ENCODE measurements at regions of chr17 and their contacts with region 1.

Region 1: DNA sequence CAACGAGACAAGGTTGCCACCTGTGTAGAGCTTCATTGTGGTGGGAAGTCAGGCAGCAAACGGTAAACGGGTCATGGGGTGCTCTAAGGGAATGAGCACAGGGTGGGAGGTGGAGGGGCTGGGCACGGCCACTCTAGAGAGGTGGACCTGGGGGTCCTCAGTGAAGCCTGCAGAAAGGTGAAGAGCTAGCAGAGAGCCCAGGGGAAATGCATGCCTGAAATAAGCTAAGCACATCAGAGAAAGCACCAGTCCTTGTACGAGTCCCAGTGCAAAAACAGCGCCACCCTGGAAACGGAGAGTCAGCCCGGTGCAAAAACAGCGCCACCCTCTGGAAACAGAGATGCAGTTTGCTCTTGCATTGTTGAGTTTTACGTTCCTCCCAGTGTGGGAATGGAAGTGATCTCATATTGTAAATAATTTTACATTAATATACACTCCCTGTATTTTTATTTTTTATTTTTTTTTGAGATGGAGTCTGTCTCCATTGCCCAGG is 65.0 kb downstream of the TBC1D16 start:
- DNase-seq: peak; percentile 66
- ATAC-seq: peak; percentile 58
- H3K4me3 Mint-ChIP-seq: no peak overlapping the region
- H3K27ac Mint-ChIP-seq: no peak overlapping the region
- H3K4me1 Mint-ChIP-seq: peaks cover 27% of the 10 kb centered on the region
- H3K27me3 Mint-ChIP-seq: no peaks in the 10 kb centered on the region
- CTCF ChIP-seq: peak; percentile 75

Region 2: GRCh38 chr17:79789534-79790353 is 180.9 kb before region 1 on chr17:
- CTCF ChIA-PET with region 1: interaction called, 10 read pairs
- POLR2A ChIA-PET with region 1: no interaction called
- DNase-seq: peak; percentile 82
- ATAC-seq: peak; percentile 50
- H3K4me3 Mint-ChIP-seq: peak overlapping the region; percentile 65
- H3K27ac Mint-ChIP-seq: no peak overlapping the region
- H3K4me1 Mint-ChIP-seq: peaks cover 48% of the 10 kb centered on the region
- H3K27me3 Mint-ChIP-seq: peaks cover 83% of the 10 kb centered on the region
- CTCF ChIP-seq: peak; percentile 65

Region 3: DNA sequence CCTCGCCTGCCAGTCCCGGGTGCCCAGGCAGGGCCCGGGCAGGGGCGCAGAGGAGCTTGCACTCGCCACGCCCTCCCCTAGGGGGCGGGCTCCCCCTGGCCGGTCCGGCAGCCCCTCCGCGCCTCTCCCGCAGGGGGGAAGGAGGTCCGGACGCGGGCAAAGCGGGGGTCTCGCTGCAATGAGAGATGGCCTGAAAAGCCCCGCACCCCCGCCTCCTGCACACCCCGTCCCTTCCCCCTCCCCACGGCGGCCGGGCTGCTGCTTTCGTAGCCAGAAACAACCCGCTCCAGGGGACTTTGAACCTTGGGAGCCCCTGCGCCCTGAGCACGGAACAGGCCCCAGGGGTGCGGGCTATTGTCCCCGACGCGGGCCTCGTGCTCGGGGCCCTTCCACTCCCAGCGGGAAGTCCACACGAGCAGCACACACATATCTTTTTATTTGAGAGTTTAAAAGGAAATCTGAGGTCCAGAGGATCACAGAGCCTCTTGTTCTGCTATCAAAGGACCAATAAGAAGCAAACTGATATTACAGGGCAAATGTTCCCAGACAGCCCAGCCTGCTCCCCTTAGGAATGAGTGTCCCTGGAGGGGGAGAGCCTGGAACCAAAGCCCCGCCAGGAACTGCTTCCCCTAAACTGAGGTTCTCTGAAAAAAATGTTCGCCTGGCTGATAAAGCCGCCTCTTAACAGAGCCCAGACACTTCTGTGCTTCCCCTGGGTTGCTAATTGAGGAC is 125.6 kb before region 1 on chr17:
- CTCF ChIA-PET with region 1: interaction called, 24 read pairs
- POLR2A ChIA-PET with region 1: interaction called, 3 read pairs
- DNase-seq: peak; percentile 73
- ATAC-seq: peak; percentile 50
- H3K4me3 Mint-ChIP-seq: peak overlapping the region; percentile 61
- H3K27ac Mint-ChIP-seq: no peak overlapping the region
- H3K4me1 Mint-ChIP-seq: peaks cover 13% of the 10 kb centered on the region
- H3K27me3 Mint-ChIP-seq: peaks cover 87% of the 10 kb centered on the region
- CTCF ChIP-seq: peak; percentile 88

Region 4: DNA sequence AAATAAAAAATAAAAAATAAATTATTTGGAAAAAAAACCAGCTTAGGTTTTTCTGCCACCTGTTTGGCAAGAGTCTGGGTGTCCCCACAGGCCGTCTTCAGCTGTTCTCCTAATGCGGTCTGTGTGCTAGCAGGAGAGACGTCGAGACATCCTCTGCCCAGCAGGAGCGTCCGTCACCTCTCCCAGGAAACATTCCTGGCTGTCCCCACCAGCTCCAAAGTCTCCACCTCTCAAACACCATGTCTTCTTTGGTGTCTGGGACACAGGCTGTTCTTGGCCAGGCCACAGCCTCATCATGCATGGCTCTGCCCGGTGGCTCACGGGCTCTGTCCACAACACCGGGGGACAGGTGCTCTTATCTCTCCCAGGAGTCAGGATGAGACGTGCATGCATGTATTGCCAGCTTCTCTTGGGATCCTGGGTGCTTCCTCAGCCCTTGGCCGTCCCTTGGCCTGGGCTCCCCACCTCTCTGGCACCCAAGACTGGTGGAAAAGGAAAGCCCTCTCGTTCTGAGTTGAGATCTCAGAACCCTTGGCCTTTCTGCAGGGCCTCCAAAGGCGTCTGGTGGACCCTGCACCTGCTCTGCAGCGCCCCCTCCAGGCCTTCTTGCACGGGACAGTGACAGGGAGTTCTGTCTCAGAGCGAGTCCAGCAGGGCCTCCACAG is 46.5 kb before region 1 on chr17:
- CTCF ChIA-PET with region 1: interaction called, 14 read pairs
- POLR2A ChIA-PET with region 1: no interaction called
- DNase-seq: peak; percentile 97
- ATAC-seq: peak; percentile 86
- H3K4me3 Mint-ChIP-seq: no peak overlapping the region
- H3K27ac Mint-ChIP-seq: 0 out of 2 replicates have a peak overlapping the region, but pooled peaks have one; percentile 90
- H3K4me1 Mint-ChIP-seq: peaks cover 13% of the 10 kb centered on the region
- H3K27me3 Mint-ChIP-seq: peaks cover 7% of the 10 kb centered on the region
- CTCF ChIP-seq: peak; percentile 95

Region 5: DNA sequence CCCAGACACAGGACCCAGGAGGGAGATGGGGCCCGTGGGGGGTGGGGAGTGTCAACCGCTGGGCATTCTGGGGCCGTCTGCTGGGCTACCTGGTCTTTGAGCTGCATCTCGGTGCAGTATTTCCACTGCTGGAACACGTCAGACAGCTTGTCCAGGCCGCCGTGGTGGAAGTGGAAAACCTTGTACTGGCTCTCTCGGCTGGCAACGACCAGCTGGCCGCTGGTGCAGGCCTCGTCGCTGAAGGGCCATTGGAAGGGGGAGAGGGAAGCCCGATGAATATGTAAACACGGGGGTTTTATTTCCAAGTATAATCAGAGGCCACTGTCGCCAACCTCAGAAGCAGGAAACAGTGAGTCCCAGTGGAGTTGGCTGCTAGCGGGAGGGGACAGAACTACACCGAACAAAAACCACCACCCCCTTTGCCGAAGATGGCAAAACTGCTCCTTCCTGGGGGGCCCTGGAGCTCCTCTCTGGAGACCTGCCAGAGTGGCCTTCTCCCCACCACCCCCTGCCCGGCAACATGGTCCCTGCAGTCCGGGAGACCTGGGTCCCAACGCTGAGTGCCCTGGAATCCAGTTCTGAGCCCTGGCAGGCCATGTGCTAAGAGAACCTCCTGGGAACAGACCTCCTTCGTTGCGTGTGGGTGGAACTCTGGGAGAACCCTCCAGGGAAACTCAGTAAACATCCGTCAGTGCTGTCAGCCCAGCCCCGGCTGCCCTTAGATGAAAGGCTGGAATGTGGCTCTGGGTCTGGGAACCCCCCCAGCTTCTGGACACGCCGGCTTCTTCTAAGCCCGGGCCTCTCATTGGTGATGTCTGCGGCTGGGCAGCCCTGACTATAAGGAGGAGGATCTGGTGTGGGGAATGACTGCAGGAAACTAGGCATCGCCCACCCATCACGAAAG is 19.0 kb before region 1 on chr17:
- CTCF ChIA-PET with region 1: interaction called, 71 read pairs
- POLR2A ChIA-PET with region 1: no interaction called
- DNase-seq: no peak
- ATAC-seq: no peak
- H3K4me3 Mint-ChIP-seq: peak overlapping the region; percentile 68
- H3K27ac Mint-ChIP-seq: peak overlapping the region; percentile 100
- H3K4me1 Mint-ChIP-seq: peaks cover 84% of the 10 kb centered on the region
- H3K27me3 Mint-ChIP-seq: no peaks in the 10 kb centered on the region
- CTCF ChIP-seq: no peak

Region 6: DNA sequence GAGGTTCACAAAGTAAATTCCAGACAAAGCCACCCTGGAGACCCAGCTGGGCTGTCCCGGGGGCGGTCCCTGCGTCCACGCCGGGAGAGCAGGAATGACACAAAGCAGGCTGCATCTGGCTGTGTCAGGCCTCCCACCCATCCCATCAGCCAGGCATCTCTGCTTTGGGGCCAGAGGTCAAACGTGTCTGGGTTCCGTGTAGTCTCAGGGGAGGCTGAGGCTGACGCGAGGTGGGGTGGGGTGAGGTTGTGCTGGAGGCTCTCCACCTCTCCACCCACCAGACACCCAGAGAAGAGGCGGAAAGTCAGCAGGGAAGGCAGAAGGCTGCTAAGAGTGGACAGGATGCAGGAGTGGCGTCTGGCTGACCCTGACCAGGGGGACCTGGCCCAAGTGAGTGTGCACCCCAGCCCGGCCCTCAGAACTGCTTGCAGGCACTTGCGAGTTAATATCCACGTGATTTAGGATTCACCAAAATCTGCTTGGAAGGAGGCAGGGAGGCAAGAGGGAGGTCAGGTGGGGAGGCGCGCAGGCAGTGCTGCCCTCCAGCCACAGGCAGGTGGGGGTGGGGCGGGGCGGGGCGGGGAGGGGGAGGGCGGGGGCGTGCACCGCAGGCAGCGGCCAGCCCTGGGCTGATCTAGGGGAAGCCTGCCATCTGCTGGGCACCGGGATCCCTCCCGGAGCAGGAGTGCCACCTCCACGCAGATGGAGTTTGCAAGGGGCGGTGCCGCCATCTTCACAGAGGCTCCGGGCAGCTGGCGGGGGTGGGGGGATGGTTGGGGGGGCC is 20.7 kb after region 1 on chr17:
- CTCF ChIA-PET with region 1: interaction called, 28 read pairs
- POLR2A ChIA-PET with region 1: interaction called, 4 read pairs
- DNase-seq: peak; percentile 87
- ATAC-seq: peak; percentile 82
- H3K4me3 Mint-ChIP-seq: peak overlapping the region; percentile 29; the same call in 1 of the 2 replicates
- H3K27ac Mint-ChIP-seq: peak overlapping the region; percentile 79; the same call in 1 of the 2 replicates
- H3K4me1 Mint-ChIP-seq: peaks cover 58% of the 10 kb centered on the region
- H3K27me3 Mint-ChIP-seq: no peaks in the 10 kb centered on the region
- CTCF ChIP-seq: peak; percentile 15; the same call in 1 of the 2 replicates

Region 7: GRCh38 chr17:80109713-80110446 is 139.3 kb after region 1 on chr17:
- CTCF ChIA-PET with region 1: no interaction called
- POLR2A ChIA-PET with region 1: no interaction called
- DNase-seq: peak; percentile 9
- ATAC-seq: no peak
- H3K4me3 Mint-ChIP-seq: no peak overlapping the region
- H3K27ac Mint-ChIP-seq: no peak overlapping the region
- H3K4me1 Mint-ChIP-seq: peaks cover 6% of the 10 kb centered on the region; the same call in 1 of the 2 replicates
- H3K27me3 Mint-ChIP-seq: no peaks in the 10 kb centered on the region
- CTCF ChIP-seq: no peak